ENCODE measurements at regions of chr14 and their contacts with region 1.

Region 1: DNA sequence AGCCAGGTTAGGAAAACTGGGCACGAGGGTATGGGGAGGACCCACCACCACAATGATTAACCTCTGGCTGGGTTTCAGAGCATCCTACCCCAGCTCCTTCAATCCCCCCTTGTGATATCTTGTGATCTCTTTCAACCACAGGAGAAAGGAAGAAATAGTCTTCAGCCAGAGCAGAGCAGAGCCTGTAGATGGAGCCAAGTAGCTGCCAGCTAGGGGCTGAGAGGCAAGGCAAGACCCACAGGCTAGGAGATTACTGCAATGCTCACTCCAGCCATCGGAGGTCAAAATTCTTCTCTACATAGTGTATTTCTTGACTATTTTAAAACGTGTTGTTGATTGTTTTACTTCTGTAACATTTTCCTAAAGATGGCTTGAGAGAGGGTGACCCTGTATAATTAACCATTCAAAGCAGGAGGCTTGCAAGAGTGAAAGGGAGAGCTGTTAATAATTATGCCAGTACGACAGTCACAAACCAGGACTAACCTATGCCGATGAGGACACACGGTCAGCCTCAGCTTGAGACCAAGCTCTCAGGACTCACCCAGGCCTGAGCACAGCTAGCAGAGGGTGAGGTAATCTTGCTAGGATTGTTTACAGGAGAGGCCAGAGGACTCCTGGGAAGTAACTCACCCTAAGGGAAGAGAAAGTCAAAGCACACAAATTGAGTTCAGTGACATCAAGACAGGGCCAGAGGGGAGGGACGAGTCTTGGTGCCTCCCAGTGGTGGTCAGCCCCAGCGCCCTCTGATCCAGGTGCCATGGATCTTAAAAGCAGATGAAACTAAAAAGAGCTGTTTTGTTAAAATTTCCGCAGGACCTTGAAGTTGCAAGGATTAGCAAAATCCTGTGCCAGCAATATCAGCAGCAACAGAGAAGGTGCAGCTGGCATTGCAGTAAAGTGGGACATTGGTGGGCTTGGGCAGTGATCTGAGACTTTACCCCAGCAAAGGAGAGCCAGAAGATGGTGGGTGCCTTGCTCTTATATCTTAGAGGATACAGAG is 29.8 kb upstream of the CDKN3 start:
- DNase-seq: peak in 26 of 35 experiments; percentile 2 to 52 (median 14)
- ATAC-seq: peak; percentile 74 to 88 (median 85)
- H3K4me3 ChIP-seq: no peak overlapping the region
- H3K4me3 Mint-ChIP-seq: no peak overlapping the region
- H3K27ac ChIP-seq: no peak overlapping the region
- H3K27ac Mint-ChIP-seq: no peak overlapping the region
- H3K4me1 ChIP-seq: no peaks in the 10 kb centered on the region
- H3K4me1 Mint-ChIP-seq: no peaks in the 10 kb centered on the region
- H3K27me3 ChIP-seq: peaks cover 0 to 12% of the 10 kb centered on the region in 2 experiments
- H3K27me3 Mint-ChIP-seq: peaks cover 9 to 13% of the 10 kb centered on the region in 2 donors

Region 2: GRCh38 chr14:54428527-54428926 is 61.5 kb after region 1 on chr14:
- CTCF ChIA-PET with region 1: no interaction called
- POLR2A ChIA-PET with region 1: no interaction called
- DNase-seq: no peak
- ATAC-seq: no peak
- H3K4me3 ChIP-seq: no peak overlapping the region
- H3K4me3 Mint-ChIP-seq: no peak overlapping the region
- H3K27ac ChIP-seq: no peak overlapping the region
- H3K27ac Mint-ChIP-seq: peak overlapping the region in 1 of 2 donors; percentile 30
- H3K4me1 ChIP-seq: no peaks in the 10 kb centered on the region
- H3K4me1 Mint-ChIP-seq: peaks cover 10 to 14% (median 12%) of the 10 kb centered on the region in 3 donors
- H3K27me3 ChIP-seq: no peaks in the 10 kb centered on the region
- H3K27me3 Mint-ChIP-seq: no peaks in the 10 kb centered on the region

Region 3: GRCh38 chr14:55446218-55446654 is 1079.2 kb after region 1 on chr14:
- CTCF ChIA-PET with region 1: no interaction called
- POLR2A ChIA-PET with region 1: interaction called in 1 of 2 experiments, 16 read pairs
- DNase-seq: peak in 29 of 35 experiments; percentile 8 to 79 (median 32)
- ATAC-seq: peak in 2 of 4 experiments; percentile 44 to 56
- H3K4me3 ChIP-seq: no peak overlapping the region
- H3K4me3 Mint-ChIP-seq: no peak overlapping the region
- H3K27ac ChIP-seq: no peak overlapping the region
- H3K27ac Mint-ChIP-seq: no peak overlapping the region
- H3K4me1 ChIP-seq: no peaks in the 10 kb centered on the region
- H3K4me1 Mint-ChIP-seq: peaks cover 3 to 6% (median 3%) of the 10 kb centered on the region in 3 donors
- H3K27me3 ChIP-seq: no peaks in the 10 kb centered on the region
- H3K27me3 Mint-ChIP-seq: peaks cover 0 to 2% of the 10 kb centered on the region in 2 donors

Region 4: DNA sequence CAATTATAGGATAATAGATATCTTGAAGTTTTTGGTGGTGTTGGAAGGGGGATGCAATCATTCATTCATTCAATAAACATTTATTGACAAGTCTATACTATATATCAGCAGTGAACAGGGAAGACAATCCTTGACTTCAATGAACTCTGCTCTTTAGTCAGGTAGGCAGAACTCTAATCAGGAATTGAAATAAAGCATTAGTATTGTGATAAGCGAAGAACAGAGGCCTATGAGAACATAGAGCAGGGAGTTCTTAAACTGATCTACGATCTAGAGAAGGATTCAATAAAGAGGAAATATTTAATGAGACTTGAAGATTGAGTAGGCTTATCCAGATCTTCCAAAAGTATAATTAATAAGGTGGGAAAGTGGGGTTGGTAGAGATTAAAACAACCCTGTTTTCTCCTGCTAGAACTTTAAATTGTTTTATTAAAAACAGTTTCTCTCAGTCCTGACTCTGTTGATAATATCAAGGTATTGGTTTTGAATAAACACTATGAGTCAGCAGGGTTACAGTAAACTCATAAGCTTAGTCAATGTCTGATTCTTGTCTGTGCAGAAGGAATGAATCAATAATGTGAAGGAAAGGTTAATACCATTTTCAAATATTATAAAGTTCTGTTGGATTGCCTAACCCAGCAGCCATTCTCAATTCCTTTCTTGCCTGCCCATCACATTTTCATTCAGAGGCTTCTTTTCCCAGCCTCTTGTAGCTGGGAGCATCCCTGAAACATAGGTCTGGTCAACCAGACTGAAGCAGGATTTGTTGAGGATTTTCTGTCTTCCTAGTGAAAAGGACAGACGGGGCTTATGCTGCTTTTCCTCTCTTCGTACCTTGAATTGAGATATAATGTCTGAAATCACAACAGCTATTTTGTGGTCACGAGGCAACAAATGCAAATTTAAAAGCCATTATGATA is 1174.1 kb after region 1 on chr14:
- CTCF ChIA-PET with region 1: no interaction called
- POLR2A ChIA-PET with region 1: no interaction called
- DNase-seq: no peak
- ATAC-seq: no peak
- H3K4me3 ChIP-seq: no peak overlapping the region
- H3K4me3 Mint-ChIP-seq: no peak overlapping the region
- H3K27ac ChIP-seq: no peak overlapping the region
- H3K27ac Mint-ChIP-seq: no peak overlapping the region
- H3K4me1 ChIP-seq: no peaks in the 10 kb centered on the region
- H3K4me1 Mint-ChIP-seq: no peaks in the 10 kb centered on the region
- H3K27me3 ChIP-seq: no peaks in the 10 kb centered on the region
- H3K27me3 Mint-ChIP-seq: no peaks in the 10 kb centered on the region